Ovary (tissue), 10 donors: ENCODE measurements at regions of chr17 and their contacts with region 1.

Region 1: DNA sequence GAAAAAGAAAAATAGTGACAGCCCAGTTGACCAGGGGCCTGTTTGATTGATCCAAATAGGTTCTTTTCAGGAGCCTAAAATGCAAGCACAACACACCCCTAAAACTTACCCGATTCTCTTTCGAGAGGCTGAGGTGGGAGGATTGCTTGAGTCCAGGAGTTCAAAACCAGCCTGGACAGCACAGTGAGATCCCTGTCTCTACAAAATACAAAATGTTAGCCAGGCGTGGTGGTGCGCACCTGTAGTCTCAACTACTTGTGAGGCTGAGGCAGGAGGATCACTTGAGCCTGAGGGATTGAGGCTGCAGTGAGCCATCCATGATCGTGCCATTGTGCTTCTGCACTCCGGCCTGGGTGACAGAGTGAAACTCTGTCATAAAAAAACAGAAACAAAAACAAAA is 1.5 kb upstream of the KIF19 start:
- DNase-seq: no peak
- H3K4me3 ChIP-seq: no peak overlapping the region
- H3K27ac ChIP-seq: no peak overlapping the region
- H3K4me1 ChIP-seq: peaks cover 3% of the 10 kb centered on the region
- H3K27me3 ChIP-seq: no peaks in the 10 kb centered on the region
- CTCF ChIP-seq: no peak
- EP300 ChIP-seq: no peak
- POLR2A ChIP-seq: no peak

Region 2: GRCh38 chr17:73777127-73777441 is 547.4 kb before region 1 on chr17:
- intact Hi-C with region 1: loop called in 1 of 4 experiments (anchors 5 kb)
- DNase-seq: no peak
- H3K4me3 ChIP-seq: no peak overlapping the region
- H3K27ac ChIP-seq: no peak overlapping the region
- H3K4me1 ChIP-seq: no peaks in the 10 kb centered on the region
- H3K27me3 ChIP-seq: no peaks in the 10 kb centered on the region
- CTCF ChIP-seq: no peak
- EP300 ChIP-seq: no peak
- POLR2A ChIP-seq: no peak

Region 3: DNA sequence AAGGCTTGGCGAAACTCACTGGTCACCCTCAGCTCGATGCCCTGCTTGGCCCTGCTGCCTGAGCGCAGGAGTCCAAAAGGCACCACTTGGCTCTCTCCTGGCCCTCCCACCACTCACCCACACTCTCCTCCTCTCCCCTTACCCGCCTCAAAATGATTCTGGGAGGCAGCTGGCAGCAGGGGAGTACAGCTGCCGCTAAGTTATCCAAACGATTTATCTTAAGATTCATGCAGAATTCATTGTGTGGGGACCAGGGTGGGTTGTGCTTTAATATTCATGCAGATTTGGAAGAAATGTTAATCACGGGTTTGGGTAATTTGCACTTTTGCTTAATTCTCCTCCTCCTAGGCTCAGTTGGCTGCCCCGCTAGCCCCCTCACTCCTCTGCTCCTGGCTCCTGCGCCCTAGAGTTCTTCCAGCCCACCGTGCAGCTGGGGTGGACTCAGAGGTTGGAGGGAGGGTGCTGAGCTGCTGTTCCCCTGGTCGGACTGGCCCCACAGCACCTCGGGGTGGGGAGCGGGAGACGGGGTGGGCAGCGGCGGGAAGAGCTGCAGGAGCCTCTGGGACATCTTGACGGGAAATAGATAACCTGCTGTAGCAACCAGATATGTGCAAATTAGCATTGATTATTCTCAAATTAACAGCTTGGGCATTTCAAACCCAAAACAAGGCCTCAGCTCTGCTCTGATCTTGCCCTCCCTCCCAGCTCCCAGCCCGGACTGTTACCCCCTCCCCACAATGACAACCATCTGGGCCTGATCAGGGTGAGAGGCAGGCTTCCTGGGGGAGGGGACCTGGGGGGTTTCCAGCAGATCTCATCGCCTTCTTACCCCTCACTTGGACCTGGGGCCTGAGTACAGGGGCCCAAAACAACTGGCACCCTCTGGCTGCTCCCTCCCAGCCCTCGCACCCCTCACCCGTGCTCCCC is 243.6 kb before region 1 on chr17:
- intact Hi-C with region 1: no loop called
- DNase-seq: no peak
- H3K4me3 ChIP-seq: no peak overlapping the region
- H3K27ac ChIP-seq: no peak overlapping the region
- H3K4me1 ChIP-seq: no peaks in the 10 kb centered on the region
- H3K27me3 ChIP-seq: no peaks in the 10 kb centered on the region
- CTCF ChIP-seq: no peak
- EP300 ChIP-seq: no peak
- POLR2A ChIP-seq: no peak

Region 4: DNA sequence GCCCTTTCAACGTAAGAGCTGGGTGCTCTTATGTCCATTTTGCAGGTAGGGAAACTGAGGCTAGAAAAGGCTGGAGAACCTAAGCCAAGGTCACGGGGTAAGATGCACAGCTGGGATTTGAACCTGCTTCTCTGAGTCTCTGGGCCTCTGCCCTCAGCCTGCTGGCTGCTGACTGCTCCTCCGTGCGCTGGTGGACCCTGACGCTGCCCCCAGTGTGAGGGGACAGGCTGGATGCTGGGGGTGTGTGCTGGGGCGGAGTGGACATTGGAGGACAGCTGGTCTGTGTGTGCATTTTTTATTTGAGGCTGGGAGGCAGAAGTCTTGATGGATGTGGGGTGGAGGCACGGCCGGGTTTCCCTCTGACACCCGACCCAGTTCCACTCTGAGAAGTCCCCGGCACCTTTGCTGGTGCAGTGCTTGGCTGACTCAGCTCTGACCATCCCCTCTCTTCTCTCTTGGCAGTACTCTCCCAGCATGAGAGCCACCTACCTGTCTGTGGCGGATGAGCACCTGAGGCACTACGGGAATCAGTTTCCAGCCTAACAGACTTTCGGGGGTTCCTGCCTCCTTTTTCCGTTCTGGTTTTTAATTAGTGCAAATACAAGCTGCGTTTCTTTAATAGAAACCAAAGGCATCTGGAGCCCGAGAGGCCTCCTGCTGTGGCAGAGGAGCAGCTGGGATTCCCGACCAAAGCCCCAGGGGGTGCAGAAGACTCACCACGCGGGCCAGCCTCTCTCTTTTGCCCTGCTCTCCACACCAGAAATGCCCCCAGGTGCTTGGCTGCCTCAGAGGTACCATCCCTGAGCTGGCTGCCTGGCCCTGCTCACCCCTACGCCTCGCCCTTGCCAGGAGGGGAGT is 64.6 kb before region 1 on chr17:
- intact Hi-C with region 1: no loop called
- DNase-seq: no peak
- H3K4me3 ChIP-seq: no peak overlapping the region
- H3K27ac ChIP-seq: no peak overlapping the region
- H3K4me1 ChIP-seq: no peaks in the 10 kb centered on the region
- H3K27me3 ChIP-seq: no peaks in the 10 kb centered on the region
- CTCF ChIP-seq: no peak
- EP300 ChIP-seq: no peak
- POLR2A ChIP-seq: no peak

Region 5: GRCh38 chr17:75720725-75721462 is 1396.4 kb after region 1 on chr17 and contains the start of gene ITGB4:
- intact Hi-C with region 1: no loop called
- DNase-seq: peak in 2 of 5 donors; percentile 44 to 51
- H3K4me3 ChIP-seq: peak within 1 kb of the TSS; percentile 28
- H3K27ac ChIP-seq: no peak within 1 kb of the TSS
- H3K4me1 ChIP-seq: no peaks in the 10 kb centered on the region
- H3K27me3 ChIP-seq: no peaks in the 10 kb centered on the region
- CTCF ChIP-seq: no peak
- EP300 ChIP-seq: no peak
- POLR2A ChIP-seq: no peak
- total RNA-seq, gene ITGB4: 6.3 to 55.6 (median 22.5) TPM